ENCODE measurements at regions of chr6 and their contacts with region 1.

Region 1: DNA sequence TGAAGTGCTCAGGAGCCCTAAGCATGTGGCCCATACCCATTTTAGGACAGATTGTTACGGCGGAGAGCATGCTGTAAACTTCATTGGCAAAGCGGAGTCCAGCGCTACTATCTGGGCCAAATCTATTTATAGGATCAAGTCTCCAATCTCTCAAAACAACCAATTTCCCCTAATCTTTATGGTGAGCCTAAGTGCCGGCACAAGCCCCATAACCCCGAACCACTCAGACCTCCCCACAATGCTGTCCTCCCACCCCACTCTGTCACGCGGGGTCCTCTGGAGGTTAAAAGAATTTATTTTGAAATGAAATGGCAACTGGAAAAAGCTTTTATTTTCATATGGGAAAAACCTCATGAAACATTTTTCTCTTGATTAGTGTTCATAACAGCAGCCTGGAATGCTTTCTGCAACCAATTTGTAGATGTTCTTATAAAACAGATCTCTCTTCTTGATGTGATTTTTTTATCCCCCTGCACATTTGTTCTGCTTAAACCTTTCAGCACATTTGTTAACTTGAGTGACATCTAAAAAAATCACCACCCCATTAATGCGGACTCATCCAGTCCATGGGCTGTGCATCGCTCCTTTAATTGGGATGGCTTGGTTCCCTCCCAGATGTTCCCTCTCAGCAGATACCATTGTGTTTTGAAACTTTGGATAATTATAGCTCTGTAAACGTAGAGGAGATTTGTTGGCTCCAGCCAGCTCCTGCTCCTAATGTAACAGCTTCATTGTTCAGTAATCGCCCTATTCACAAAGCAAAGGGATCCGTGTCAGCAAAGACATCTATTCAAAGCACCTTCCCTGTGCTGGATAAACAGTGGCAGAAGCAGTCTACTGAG is 323.6 kb downstream of the CD83 start:
- DNase-seq: peak; percentile 28 to 35
- ATAC-seq: peak; percentile 92 to 96
- H3K4me3 ChIP-seq: peak overlapping the region in 2 of 4 donors; percentile 19 to 37
- H3K27ac ChIP-seq: peak overlapping the region; percentile 41 to 66 (median 50)
- H3K4me1 ChIP-seq: peaks cover 18 to 31% of the 10 kb centered on the region in 2 donors
- H3K27me3 ChIP-seq: no peaks in the 10 kb centered on the region
- CTCF ChIP-seq: no peak
- POLR2A ChIP-seq: no peak

Region 2: GRCh38 chr6:14510038-14510437 is 68.9 kb after region 1 on chr6:
- in situ Hi-C with region 1: no loop called
- intact Hi-C with region 1: no loop called
- DNase-seq: no peak
- ATAC-seq: no peak
- H3K4me3 ChIP-seq: no peak overlapping the region
- H3K27ac ChIP-seq: no peak overlapping the region
- H3K4me1 ChIP-seq: no peaks in the 10 kb centered on the region
- H3K27me3 ChIP-seq: no peaks in the 10 kb centered on the region
- CTCF ChIP-seq: no peak
- POLR2A ChIP-seq: no peak

Region 3: DNA sequence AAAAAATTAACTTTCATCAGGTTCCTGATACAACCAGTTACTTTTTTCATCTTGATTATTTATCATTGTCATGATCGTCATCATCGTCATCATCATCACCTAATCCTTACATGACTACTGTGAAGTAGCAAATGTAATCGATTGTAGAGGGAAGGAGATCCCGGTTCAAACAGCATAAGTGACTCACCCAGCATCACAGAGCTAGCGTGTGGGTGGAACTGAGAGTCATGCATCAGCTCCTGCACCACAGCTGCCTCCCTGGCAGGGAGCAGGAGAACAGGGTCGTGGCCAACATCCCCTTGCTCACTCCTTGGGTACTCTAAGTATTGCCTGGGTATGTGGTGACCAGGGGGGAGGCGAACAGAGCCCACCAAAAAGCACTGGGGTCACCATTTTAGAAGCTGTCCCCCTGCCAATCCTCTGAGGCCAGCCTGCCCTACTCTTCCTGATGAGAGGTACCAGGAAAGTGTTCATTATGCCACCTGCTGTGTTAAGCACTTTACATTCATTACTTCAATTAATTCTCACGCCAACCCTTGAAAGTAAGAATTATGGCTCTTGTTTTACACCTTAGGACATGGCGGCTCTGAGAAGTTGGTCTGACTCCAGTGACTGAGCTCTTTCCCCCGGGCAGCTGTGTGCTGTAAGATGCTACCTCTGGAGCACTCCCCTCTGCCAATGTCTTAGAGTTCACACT is 101.7 kb after region 1 on chr6:
- in situ Hi-C with region 1: no loop called
- intact Hi-C with region 1: loop called (anchors 5 kb)
- DNase-seq: no peak
- ATAC-seq: no peak
- H3K4me3 ChIP-seq: no peak overlapping the region
- H3K27ac ChIP-seq: no peak overlapping the region
- H3K4me1 ChIP-seq: peaks cover 26 to 37% of the 10 kb centered on the region in 2 donors
- H3K27me3 ChIP-seq: no peaks in the 10 kb centered on the region
- CTCF ChIP-seq: no peak
- POLR2A ChIP-seq: no peak

Measured in gastrocnemius medialis (tissue), 4 donors.